T-cell (primary cell): ENCODE measurements at regions of chr1 and their contacts with region 1.

Region 1: DNA sequence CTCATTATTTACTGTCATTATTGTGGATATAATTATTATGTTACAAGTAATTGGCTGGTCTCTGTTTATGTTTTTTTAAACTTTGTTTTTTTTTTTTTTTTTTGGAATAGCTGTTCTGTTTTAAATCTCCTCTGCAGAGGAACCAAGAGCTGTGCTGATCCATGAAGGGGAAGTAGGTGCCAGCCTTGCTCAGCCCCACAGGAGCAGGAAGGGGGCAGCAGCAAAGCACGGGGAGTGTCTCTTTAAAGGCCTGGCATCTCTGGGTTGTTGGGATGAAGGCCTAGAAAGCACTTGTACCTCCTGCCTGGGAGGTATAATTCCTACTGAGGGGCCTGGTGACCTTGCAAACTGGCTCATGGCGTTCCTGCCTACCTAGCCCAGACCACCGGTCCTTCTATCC is 2.5 kb upstream of the GRHL3 start:
- DNase-seq: no peak
- ATAC-seq: no peak
- H3K4me3 ChIP-seq: no peak overlapping the region
- H3K4me3 Mint-ChIP-seq: no peak overlapping the region
- H3K27ac ChIP-seq: no peak overlapping the region
- H3K27ac Mint-ChIP-seq: no peak overlapping the region
- H3K4me1 ChIP-seq: peaks cover 16 to 35% of the 10 kb centered on the region in 2 experiments
- H3K4me1 Mint-ChIP-seq: peaks cover 33 to 35% (median 33%) of the 10 kb centered on the region in 3 donors
- H3K27me3 ChIP-seq: peaks cover 3 to 38% of the 10 kb centered on the region in 2 experiments
- H3K27me3 Mint-ChIP-seq: peaks cover 13 to 52% of the 10 kb centered on the region in 2 donors

Region 2: GRCh38 chr1:24409535-24409934 is 92.9 kb after region 1 on chr1:
- CTCF ChIA-PET with region 1: no interaction called
- POLR2A ChIA-PET with region 1: no interaction called
- DNase-seq: no peak
- ATAC-seq: no peak
- H3K4me3 ChIP-seq: no peak overlapping the region
- H3K4me3 Mint-ChIP-seq: no peak overlapping the region
- H3K27ac ChIP-seq: no peak overlapping the region
- H3K27ac Mint-ChIP-seq: no peak overlapping the region
- H3K4me1 ChIP-seq: peaks cover 8 to 14% of the 10 kb centered on the region in 2 experiments
- H3K4me1 Mint-ChIP-seq: peaks cover 19 to 23% (median 21%) of the 10 kb centered on the region in 3 donors
- H3K27me3 ChIP-seq: no peaks in the 10 kb centered on the region
- H3K27me3 Mint-ChIP-seq: no peaks in the 10 kb centered on the region

Region 3: GRCh38 chr1:24754229-24754628 is 437.6 kb after region 1 on chr1:
- CTCF ChIA-PET with region 1: no interaction called
- POLR2A ChIA-PET with region 1: interaction called in 1 of 2 experiments, 10 read pairs
- DNase-seq: no peak
- ATAC-seq: no peak
- H3K4me3 ChIP-seq: no peak overlapping the region
- H3K4me3 Mint-ChIP-seq: no peak overlapping the region
- H3K27ac ChIP-seq: no peak overlapping the region
- H3K27ac Mint-ChIP-seq: no peak overlapping the region
- H3K4me1 ChIP-seq: no peaks in the 10 kb centered on the region
- H3K4me1 Mint-ChIP-seq: peaks cover 0 to 2% (median 0%) of the 10 kb centered on the region in 3 donors
- H3K27me3 ChIP-seq: peaks cover 0 to 5% of the 10 kb centered on the region in 2 experiments
- H3K27me3 Mint-ChIP-seq: peaks cover 0 to 3% of the 10 kb centered on the region in 2 donors